Activated naive CD4-positive, alpha-beta T cell treated with anti-CD3 and anti-CD28 coated beads, Interleukin-2, amount 10 ng/mL, durations not matched to agents 7 days and 5 days (primary cell): ENCODE measurements at regions of chr18 and their contacts with region 1.

Region 1: GRCh38 chr18:3593904-3594661 is 144.1 kb downstream of the TGIF1 start:
- DNase-seq: peak; percentile 92
- H3K4me3 Mint-ChIP-seq: peak overlapping the region; percentile 84
- H3K27ac Mint-ChIP-seq: peak overlapping the region; percentile 99
- H3K4me1 Mint-ChIP-seq: peaks cover 60% of the 10 kb centered on the region
- H3K27me3 Mint-ChIP-seq: no peaks in the 10 kb centered on the region

Region 2: GRCh38 chr18:3281456-3282400 is 312.4 kb before region 1 on chr18:
- CTCF ChIA-PET with region 1: interaction called, 12 read pairs
- DNase-seq: no peak
- H3K4me3 Mint-ChIP-seq: no peak overlapping the region
- H3K27ac Mint-ChIP-seq: no peak overlapping the region
- H3K4me1 Mint-ChIP-seq: no peaks in the 10 kb centered on the region
- H3K27me3 Mint-ChIP-seq: peaks cover 6% of the 10 kb centered on the region

Region 3: DNA sequence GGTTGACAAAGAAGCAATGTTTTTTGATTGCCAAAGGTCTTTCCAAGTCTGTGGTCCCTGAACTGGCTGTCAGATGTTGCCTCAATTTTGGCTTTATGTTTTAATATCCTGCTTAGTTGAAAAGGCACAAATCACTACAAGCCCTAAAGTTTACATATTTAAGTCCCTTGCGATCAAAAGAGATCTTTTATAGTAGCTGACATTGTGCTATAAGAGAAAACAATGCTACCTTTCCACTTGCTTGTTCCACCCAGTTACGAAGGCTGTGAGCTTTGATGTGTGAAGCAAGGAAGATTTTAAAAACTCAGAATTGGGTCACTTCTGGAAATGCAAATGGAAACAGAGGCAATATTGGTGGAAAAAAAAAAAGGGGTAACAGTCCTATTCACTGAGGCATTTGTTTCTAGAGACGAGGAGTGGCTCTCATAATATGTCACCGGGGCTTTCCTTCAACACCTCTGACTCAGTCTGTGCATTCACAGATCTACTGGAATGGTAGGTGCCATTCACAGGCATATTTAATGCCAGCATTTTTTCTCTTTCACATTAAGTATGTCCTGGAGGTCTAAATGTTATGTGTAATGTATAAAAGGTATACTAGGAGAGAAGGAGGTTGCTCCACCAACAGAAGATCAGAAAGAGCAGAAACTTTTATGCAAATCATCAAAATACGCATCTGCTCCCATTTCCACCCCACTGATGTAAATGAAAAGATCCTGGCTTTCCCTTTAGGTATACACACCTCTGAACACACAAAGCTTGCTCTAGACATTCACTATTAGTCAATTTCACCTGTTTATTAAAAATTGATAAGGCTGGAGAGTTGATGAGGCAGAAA is 52.3 kb before region 1 on chr18:
- CTCF ChIA-PET with region 1: no interaction called
- DNase-seq: no peak
- H3K4me3 Mint-ChIP-seq: no peak overlapping the region
- H3K27ac Mint-ChIP-seq: peak overlapping the region; percentile 2
- H3K4me1 Mint-ChIP-seq: no peaks in the 10 kb centered on the region
- H3K27me3 Mint-ChIP-seq: peaks cover 4% of the 10 kb centered on the region

Region 4: DNA sequence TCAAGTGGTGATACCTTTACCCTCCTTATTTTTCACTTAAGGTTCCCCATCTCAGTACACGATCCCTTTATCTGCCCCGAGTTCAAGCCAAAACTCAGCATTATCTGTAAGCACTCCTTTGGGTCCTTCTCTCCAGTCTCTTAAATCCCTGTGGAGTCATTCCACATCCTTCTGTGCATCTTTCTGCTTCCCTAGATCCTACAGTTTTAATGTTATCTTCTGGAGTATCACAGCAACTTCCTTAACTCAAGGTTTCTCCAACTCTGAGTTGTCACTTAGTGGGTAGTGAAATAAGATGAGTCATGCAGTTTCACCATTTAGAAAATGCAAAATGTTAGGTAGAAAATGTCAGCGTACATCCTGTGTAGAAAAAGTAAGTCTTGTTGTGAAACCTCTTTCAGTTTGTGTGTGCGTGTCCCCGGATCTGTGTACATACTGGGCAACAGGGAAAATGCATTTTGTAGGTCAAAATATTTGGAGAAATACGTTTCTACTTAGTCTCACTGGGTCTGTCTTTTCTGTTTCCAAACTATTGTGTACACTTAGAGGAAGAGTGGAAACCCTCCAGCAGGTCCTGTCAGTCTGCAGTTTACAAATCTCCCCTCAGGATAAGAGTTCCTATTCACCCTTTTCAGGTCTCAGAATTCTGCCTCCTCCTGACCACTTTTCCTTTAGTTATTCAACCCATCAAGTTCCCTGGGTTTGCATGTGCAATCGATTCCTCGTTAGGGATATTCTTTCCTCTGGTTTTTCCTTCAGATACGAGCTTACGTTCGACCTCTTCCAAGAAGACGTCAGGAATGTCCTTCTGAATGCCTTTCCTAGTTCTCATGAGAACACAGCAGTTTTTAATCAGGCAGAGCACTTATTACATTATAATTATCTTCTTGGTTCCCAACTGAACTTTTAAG is 10.7 kb after region 1 on chr18:
- CTCF ChIA-PET with region 1: interaction called, 24 read pairs
- DNase-seq: peak; percentile 49
- H3K4me3 Mint-ChIP-seq: no peak overlapping the region
- H3K27ac Mint-ChIP-seq: no peak overlapping the region
- H3K4me1 Mint-ChIP-seq: peaks cover 11% of the 10 kb centered on the region
- H3K27me3 Mint-ChIP-seq: no peaks in the 10 kb centered on the region